RWPE1 (cell line): ENCODE measurements at regions of chr9 and their contacts with region 1.

Region 1: DNA sequence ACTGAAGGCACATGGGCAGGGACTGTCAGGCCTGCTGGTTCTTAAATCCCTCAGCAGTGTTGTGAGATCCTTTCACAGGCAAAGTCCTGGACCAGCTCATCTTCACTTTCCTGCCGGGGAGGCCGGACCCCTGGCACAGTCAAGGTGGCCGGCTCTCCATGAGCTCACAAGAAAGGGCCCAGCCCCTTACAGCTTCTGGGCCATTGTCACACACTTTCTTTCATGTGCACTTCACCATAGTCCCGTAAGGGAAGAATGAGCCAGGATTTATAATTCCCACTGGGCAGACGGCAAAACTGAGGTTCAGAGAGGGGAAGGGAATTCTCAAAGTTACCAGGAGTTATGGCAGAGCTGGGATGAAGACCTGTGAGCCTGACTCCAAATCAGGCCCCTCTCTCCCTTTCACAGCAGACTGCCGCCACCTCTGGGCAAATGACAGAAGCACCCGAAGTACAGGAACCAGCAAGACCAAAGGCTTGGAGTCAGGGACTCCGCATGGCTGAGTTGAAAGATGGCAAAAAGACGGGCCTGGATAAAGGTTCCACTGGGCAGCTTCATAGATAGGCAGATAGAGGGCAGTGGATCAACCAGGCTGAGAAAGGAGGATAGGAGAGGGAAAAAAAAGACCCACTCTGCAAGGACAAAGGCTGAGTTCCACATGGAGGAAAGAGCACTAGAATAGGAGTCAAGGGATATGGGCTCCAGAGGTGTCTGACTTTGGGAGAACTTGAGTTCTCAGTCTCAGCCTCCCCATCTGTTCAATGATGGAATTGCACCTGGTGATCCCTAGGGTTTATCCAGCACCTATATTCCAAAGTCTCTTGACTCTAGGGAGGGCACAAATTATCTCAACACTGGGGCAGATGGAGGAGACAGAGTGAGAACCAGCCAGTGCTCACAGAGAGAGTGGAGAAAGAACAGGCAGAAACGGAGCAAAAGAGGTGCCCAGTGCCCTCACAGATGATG is 128.7 kb downstream of the PAX5 start:
- DNase-seq: no peak
- H3K27ac ChIP-seq: no peak overlapping the region
- CTCF ChIP-seq: no peak

Region 2: GRCh38 chr9:36637491-36638270 is 267.7 kb before region 1 on chr9:
- CTCF ChIA-PET with region 1: no interaction called
- POLR2A ChIA-PET with region 1: no interaction called
- DNase-seq: no peak
- H3K27ac ChIP-seq: no peak overlapping the region
- CTCF ChIP-seq: no peak

Region 3: GRCh38 chr9:36840898-36841536 is 64.4 kb before region 1 on chr9:
- CTCF ChIA-PET with region 1: no interaction called
- POLR2A ChIA-PET with region 1: no interaction called
- DNase-seq: no peak
- H3K27ac ChIP-seq: no peak overlapping the region
- CTCF ChIP-seq: no peak

Region 4: DNA sequence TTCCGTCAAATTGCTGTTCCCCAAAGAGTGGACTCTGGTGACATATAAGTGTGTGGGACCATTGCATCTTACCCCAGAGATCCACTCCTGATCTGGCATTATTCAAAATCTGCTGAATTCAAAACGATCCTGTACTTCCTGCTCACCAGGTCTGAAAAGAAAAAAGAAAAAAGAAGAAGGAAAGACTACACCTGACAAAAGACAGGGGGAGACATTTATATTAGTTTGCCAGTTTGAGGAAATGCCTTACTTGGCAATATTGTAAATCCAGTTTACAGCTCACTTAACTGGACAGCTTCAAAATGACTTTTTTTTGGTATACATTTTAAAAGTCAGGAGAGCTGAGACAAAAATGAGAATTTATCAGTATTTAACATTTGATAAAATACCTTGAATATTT is 502.1 kb after region 1 on chr9:
- CTCF ChIA-PET with region 1: interaction called, 12 read pairs
- POLR2A ChIA-PET with region 1: no interaction called
- DNase-seq: peak; percentile 28
- H3K27ac ChIP-seq: no peak overlapping the region
- CTCF ChIP-seq: peak; percentile 52